HEK293T (cell line): ENCODE measurements at regions of chrX and their contacts with region 1.

Region 1: DNA sequence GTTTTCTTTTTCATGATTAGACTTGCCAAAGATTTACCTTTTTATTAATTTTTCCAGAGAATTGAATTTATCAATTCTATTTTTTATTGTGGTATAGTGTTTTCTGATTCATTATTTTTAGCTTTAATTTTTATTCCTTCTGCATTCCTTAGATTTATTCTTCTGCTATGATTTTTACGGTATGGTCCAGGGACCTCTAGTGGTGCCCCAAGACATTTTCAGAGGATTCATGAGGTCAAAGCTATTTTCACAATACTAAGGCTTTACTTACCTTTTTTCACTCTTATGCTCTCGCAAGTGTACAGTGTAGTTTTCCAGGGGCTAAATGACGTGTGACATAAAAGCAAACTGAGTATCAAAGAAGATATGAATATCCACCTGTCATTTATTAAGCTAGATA is 8.0 kb downstream of the RADX start:
- DNase-seq: peak; percentile 16

Region 2: DNA sequence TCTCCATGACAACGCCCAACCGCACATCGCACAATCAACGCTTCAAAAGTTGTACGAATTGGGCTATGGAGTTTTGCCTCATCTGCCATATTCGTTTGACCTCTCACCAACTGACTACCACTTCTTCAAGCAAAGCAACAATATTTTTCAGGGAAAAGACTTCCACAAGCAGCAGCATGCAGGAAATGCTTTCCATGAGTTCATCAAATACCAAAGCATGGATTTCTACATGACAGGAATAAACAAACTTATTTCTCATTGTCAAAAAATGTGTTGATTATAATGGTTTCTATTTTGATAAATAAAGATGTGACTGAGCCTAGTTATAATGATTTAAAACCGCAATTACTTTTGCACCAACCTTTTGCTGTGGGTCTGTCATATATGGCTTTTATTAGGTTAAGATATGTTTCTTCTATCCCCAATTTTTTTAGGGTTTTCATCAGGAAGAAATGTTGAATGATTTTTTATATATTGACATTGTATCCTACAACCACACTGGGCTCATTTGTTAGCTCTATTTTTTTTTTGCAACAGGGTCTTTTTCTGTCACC is 313.3 kb before region 1 on chrX:
- CTCF ChIA-PET with region 1: no interaction called
- POLR2A ChIA-PET with region 1: no interaction called
- DNase-seq: no peak

Region 3: GRCh38 chrX:106481341-106481740 is 138.5 kb before region 1 on chrX:
- CTCF ChIA-PET with region 1: interaction called, 11 read pairs
- POLR2A ChIA-PET with region 1: no interaction called
- DNase-seq: peak; percentile 69